PC-3 (cell line): ENCODE measurements at regions of chr6 and their contacts with region 1.

Region 1: GRCh38 chr6:129709769-129710449 is at the start of gene ARHGAP18:
- DNase-seq: peak; percentile 92
- ATAC-seq: peak; percentile 98
- H3K4me3 ChIP-seq: peak within 1 kb of the TSS; percentile 73
- H3K27ac ChIP-seq: peak within 1 kb of the TSS; percentile 55
- H3K4me1 ChIP-seq: peaks cover 17% of the 10 kb centered on the region; the same call in 1 of the 2 replicates
- H3K27me3 ChIP-seq: no peaks in the 10 kb centered on the region
- CTCF ChIP-seq: no peak
- total RNA-seq, gene ARHGAP18: 4.1 and 5.9 TPM in 2 replicates

Region 2: DNA sequence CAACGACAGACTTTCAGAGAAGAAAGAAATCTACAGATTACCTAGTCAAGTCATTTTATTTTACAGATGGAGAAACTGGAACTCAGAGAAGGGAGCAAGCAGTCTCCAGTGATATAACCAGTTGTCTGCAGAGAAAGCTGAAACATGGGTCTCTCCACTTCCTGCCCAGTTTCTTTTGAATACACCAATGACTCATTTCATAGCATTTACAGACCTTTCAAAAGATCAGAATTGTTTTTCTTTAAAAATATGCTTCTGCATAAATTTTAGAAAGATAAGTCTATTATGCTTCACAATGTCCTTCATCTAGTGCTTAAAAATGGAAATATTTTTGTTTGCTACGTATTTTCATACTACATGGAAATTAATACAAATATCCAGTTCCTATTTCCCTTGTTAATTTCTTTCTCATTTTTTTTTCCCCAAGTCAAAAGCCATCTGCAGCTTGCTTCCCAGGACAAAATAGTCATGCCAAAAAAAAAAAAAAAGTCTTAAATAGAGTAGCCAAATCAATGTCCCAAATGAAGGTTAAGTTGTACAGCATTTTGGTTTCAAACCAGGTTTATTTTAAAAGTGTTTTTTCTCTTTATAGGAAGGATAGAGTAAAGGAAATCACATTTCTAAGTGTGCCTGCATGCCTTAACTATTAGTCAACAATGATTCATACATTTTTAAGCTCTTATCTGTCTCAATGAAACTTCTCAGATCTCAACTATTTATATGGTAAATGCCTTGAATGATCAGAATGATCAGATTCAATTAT is 36.8 kb before region 1 on chr6:
- CTCF ChIA-PET with region 1: no interaction called
- POLR2A ChIA-PET with region 1: no interaction called
- intact Hi-C with region 1: loop called (anchors 2 kb)
- DNase-seq: peak; percentile 83
- ATAC-seq: peak; percentile 82
- H3K4me3 ChIP-seq: peak overlapping the region; percentile 54
- H3K27ac ChIP-seq: peak overlapping the region; percentile 80
- H3K4me1 ChIP-seq: peaks cover 43% of the 10 kb centered on the region
- H3K27me3 ChIP-seq: no peaks in the 10 kb centered on the region
- CTCF ChIP-seq: no peak

Region 3: GRCh38 chr6:129695373-129696027 is 14.4 kb before region 1 on chr6:
- CTCF ChIA-PET with region 1: no interaction called
- POLR2A ChIA-PET with region 1: no interaction called
- intact Hi-C with region 1: no loop called
- DNase-seq: no peak
- ATAC-seq: peak; percentile 46
- H3K4me3 ChIP-seq: no peak overlapping the region
- H3K27ac ChIP-seq: no peak overlapping the region
- H3K4me1 ChIP-seq: no peaks in the 10 kb centered on the region
- H3K27me3 ChIP-seq: no peaks in the 10 kb centered on the region
- CTCF ChIP-seq: no peak